ENCODE measurements at regions of chr11 and their contacts with region 1.

Region 1: GRCh38 chr11:10192036-10192435 is 102.0 kb downstream of the SBF2 start:
- H3K4me3 ChIP-seq: no peak overlapping the region
- H3K27ac ChIP-seq: no peak overlapping the region
- H3K4me1 ChIP-seq: no peaks in the 10 kb centered on the region
- CTCF ChIP-seq: no peak

Region 2: DNA sequence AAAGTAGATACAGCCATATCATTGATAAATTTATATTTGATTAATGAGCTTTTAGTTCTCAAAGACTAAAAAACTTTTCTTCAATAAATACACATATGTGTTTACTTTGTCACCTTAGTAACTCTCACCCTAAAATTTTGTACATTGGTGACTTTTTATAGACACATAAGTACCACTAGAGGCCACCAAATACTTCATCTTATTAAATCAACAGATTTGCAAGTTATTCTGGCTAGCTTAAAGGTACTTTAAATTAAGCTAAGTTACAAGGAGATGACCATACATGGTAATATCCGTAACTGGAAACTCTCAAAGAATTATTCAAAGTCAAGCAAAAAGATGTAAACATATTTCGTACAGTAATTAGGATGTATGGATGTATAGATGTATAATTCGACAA is 10.2 kb before region 1 on chr11:
- CTCF ChIA-PET with region 1: interaction called, 10 read pairs
- POLR2A ChIA-PET with region 1: no interaction called
- H3K4me3 ChIP-seq: no peak overlapping the region
- H3K27ac ChIP-seq: no peak overlapping the region
- H3K4me1 ChIP-seq: no peaks in the 10 kb centered on the region
- CTCF ChIP-seq: no peak

Measured in HEK293 (cell line).